Caco-2 (cell line): ENCODE measurements at regions of chr5 and their contacts with region 1.

Region 1: GRCh38 chr5:151239237-151239861 is 13.6 kb upstream of the GM2A start:
- DNase-seq: peak; percentile 70 to 74
- H3K4me3 ChIP-seq: no peak overlapping the region
- H3K4me3 Mint-ChIP-seq: no peak overlapping the region
- H3K27ac Mint-ChIP-seq: no peak overlapping the region
- H3K4me1 ChIP-seq: peaks cover 9% of the 10 kb centered on the region
- H3K4me1 Mint-ChIP-seq: peaks cover 9% of the 10 kb centered on the region
- H3K27me3 ChIP-seq: no peaks in the 10 kb centered on the region
- H3K27me3 Mint-ChIP-seq: no peaks in the 10 kb centered on the region
- CTCF ChIP-seq: peak; percentile 87 to 92

Region 2: DNA sequence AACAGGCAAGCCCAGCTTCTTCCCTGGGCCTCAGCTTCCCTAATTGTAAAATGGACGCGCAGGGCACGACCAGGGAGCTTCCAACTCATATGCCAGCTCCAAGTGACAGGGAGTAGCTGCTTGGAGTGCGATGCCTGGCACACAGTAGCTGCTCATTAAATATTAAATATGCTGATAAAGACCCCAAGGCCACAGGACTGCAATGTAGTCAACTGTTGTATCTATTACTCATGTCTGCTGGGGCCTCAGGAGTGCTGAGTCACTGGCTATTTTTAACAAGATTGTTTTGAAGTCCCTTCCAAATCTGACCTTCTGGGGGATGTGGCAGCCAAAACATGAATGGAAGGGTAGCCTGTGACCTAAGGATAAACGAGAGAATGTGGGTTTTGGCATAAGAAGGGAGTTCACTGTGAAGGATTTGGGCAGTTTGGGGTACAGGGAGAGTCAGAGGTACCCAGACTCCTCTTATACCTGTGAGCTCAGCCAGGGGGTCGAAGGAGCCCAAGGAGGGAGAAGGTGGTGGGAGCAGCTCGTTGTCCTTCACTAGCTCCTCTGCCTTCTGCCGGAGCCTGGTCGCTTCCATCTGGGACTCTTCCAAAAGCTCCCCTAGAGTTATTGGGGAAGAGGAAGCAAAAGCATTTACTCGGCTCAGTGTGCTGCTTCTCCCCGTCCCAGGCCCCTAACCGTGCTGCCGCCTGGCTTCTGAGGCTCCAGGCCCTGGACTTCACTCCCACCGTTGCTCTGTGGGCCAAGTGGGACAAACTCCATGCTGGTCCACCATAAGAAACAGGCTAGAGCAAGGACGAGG is 176.0 kb before region 1 on chr5:
- CTCF ChIA-PET with region 1: no interaction called
- POLR2A ChIA-PET with region 1: no interaction called
- intact Hi-C with region 1: loop called (anchors 5 kb)
- DNase-seq: no peak
- H3K4me3 ChIP-seq: no peak overlapping the region
- H3K4me3 Mint-ChIP-seq: no peak overlapping the region
- H3K27ac Mint-ChIP-seq: no peak overlapping the region
- H3K4me1 ChIP-seq: no peaks in the 10 kb centered on the region
- H3K4me1 Mint-ChIP-seq: peaks cover 6% of the 10 kb centered on the region
- H3K27me3 ChIP-seq: no peaks in the 10 kb centered on the region
- H3K27me3 Mint-ChIP-seq: no peaks in the 10 kb centered on the region
- CTCF ChIP-seq: no peak